GM10248 (cell line): ENCODE measurements at regions of chr9 and their contacts with region 1.

Region 1: DNA sequence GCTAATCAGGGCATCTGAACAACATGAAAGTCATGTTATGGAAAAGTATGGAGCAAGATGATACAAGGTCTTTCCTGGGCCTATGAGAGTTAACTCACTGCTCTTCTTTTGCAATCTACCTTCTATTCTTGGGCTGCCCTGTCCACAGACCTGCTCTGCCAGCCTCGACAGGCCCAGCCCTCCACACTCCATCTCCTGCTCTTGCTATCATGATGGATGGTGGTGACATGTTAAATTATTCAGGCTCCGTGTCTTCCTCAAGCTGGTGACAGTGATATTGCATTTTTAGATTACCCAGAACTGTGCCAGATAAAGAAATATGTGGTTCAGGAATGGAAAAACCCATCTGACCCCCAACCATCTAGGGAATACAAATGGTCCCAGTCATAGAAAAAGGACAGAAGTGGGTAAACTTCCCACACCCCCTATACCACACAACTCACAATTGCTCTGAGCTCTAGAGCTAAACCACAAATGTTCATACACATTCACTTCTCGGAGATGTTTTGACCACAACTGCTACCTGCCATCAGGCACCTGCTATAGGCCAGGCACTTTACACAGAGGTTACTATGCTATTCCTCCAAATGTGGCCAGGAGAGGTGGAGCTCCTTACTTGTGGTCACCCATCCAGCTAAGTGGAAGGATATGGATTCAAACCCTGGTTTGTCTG is 311.3 kb downstream of the ASTN2 start:
- DNase-seq: no peak
- CTCF ChIP-seq: no peak

Region 2: DNA sequence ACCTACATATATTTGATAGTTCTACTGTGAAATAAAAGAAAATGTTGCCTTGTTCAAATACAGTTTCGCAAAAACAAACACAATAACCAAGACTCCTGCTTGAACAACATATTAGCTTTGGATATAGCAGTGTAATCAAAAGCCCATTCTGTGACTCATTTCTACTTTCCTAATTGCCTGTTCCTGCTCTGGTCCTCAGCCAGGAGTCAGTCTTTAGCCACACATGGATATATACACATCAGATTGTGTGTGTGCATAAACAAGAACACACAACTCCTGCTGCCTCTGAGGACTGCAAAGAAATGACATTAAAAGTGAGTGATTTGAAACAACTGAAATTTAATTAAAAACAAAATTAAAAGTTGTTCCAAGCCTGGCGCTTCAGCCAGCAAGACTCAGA is 81.7 kb before region 1 on chr9:
- CTCF ChIA-PET with region 1: no interaction called
- POLR2A ChIA-PET with region 1: no interaction called
- DNase-seq: no peak
- CTCF ChIP-seq: no peak

Region 3: DNA sequence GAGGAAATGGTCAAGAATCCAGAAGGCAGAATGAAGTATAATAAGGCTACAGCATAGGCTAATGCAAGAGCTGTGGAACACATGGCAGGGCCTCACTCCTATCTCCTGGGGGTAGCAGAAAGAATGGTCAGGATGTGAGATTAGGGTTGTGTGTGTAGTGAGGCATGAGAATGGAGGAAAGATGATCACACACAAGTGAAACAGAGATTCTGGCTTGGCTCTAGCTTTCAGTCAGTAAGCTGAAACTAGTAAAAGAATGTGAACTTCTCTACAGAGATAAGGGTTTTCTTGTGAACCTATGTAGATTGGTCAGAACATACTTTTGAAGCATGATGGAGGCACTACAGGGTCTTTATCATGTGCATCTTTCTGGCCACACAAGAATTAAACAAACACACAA is 12.5 kb after region 1 on chr9:
- CTCF ChIA-PET with region 1: interaction called, 17 read pairs
- POLR2A ChIA-PET with region 1: no interaction called
- DNase-seq: no peak
- CTCF ChIP-seq: no peak

Region 4: GRCh38 chr9:117399844-117400561 is 296.4 kb after region 1 on chr9:
- CTCF ChIA-PET with region 1: no interaction called
- POLR2A ChIA-PET with region 1: no interaction called
- DNase-seq: no peak
- CTCF ChIP-seq: no peak